ENCODE measurements at regions of chr9 and their contacts with region 1.

Region 1: DNA sequence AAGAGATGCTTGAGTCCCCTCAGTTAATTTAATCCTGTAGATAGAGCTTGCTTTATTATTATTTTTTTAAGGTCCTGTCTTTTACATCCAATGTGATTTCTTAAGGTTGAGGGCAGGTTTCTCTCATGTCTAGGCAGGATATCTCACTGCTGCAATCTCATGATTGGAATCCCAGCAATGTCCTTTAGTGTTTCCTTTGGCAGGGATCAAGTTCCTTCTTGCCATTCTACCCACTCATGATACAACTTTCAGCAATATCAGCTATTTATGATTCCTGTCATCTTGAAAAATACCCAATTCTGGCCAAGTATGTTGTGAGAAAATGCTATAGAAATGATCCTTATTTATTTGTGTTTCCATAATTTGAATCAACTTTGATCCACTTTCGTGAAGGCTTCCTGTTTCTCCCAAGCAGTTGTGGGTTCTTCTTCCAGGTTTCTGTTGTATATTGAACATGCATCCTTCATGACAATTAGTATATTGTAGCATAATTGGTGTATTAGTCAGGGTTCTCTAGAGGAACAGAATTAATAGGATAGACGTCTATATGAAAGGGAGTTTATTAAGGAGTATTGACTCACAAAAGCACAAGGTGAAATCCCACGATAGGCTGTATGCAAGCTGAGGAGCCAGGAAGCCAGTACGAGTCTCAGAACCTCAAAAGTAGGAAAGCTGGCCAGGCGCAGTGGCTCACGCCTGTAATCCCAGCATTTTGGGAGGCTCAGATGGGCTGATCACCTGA is 18.4 kb upstream of the VPS13A start:
- DNase-seq: peak; percentile 36
- H3K4me3 ChIP-seq: no peak overlapping the region
- H3K27ac ChIP-seq: no peak overlapping the region
- H3K4me1 ChIP-seq: peaks cover 19% of the 10 kb centered on the region
- H3K27me3 ChIP-seq: 0 out of 2 replicates have a peak, but pooled peaks cover 17% of the 10 kb centered on the region

Region 2: GRCh38 chr9:76761448-76761847 is 397.5 kb before region 1 on chr9:
- in situ Hi-C with region 1: loop called (anchors 10 kb)
- DNase-seq: peak; percentile 36
- H3K4me3 ChIP-seq: no peak overlapping the region
- H3K27ac ChIP-seq: no peak overlapping the region
- H3K4me1 ChIP-seq: no peaks in the 10 kb centered on the region
- H3K27me3 ChIP-seq: no peaks in the 10 kb centered on the region